PC-3 (cell line): ENCODE measurements at regions of chr6 and their contacts with region 1.

Region 1: DNA sequence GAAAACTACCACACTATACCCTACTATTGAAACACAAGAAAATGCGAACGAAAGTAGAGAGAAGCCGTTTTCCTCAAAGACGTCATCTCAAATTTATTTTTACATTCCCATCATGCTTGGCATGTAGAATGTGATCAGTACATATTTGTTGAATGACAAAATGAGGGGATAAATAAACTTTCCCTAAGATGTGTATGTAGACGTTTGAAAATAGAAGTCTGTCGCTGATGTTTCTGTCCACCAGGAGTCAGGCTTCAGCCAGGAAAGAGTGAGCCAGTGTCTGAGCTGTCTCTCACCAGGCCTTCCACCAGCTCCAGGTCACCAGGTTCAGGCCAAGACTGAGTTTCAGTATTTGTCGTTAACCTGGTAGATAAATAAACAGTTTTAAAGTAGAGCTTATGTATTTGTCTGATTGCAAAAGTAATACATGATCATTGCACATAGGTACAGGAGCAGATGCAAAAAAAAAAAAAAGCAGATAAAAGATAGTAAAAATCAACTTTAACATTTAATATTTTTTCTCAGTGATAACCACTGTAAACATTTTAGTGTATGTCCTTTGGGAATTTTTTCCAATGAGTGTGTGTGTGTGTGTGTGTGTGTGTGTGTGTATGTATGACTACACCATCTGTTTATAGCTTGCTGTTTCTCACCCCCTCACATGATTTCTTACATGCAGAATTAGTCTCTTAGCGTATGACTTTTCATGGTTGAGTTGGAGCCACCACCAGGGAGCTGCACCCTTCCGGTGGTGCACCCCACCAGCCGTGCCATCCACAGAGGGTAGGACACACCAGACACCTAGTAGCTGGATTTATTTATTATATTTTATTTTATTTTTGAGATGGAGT is 26.2 kb downstream of the WRNIP1 start:
- DNase-seq: peak; percentile 93
- ATAC-seq: peak; percentile 80
- H3K4me3 ChIP-seq: no peak overlapping the region
- H3K27ac ChIP-seq: peak overlapping the region; percentile 98
- H3K4me1 ChIP-seq: peaks cover 59% of the 10 kb centered on the region
- H3K27me3 ChIP-seq: no peaks in the 10 kb centered on the region
- CTCF ChIP-seq: peak; percentile 92

Region 2: GRCh38 chr6:2810092-2810671 is 18.8 kb after region 1 on chr6:
- CTCF ChIA-PET with region 1: no interaction called
- POLR2A ChIA-PET with region 1: no interaction called
- intact Hi-C with region 1: loop called (anchors 2 kb)
- DNase-seq: peak; percentile 98
- ATAC-seq: peak; percentile 94
- H3K4me3 ChIP-seq: no peak overlapping the region
- H3K27ac ChIP-seq: peak overlapping the region; percentile 98
- H3K4me1 ChIP-seq: peaks cover 40% of the 10 kb centered on the region
- H3K27me3 ChIP-seq: no peaks in the 10 kb centered on the region
- CTCF ChIP-seq: no peak

Region 3: GRCh38 chr6:2841264-2842138 is 50.2 kb after region 1 on chr6 and contains the start of gene SERPINB1:
- CTCF ChIA-PET with region 1: interaction called, 26 read pairs
- POLR2A ChIA-PET with region 1: interaction called, 4 read pairs
- intact Hi-C with region 1: loop called (anchors 1 kb)
- DNase-seq: peak; percentile 83
- ATAC-seq: peak; percentile 61
- H3K4me3 ChIP-seq: peak within 1 kb of the TSS; percentile 81
- H3K27ac ChIP-seq: peak within 1 kb of the TSS; percentile 94
- H3K4me1 ChIP-seq: peaks cover 61% of the 10 kb centered on the region
- H3K27me3 ChIP-seq: no peaks in the 10 kb centered on the region
- CTCF ChIP-seq: 0 out of 2 replicates have a peak, but pooled peaks have one; percentile 8
- total RNA-seq, gene SERPINB1: 78.7 and 133 TPM in 2 replicates

Region 4: GRCh38 chr6:2853761-2854395 is 62.5 kb after region 1 on chr6:
- CTCF ChIA-PET with region 1: interaction called, 4 read pairs
- POLR2A ChIA-PET with region 1: interaction called, 3 read pairs
- intact Hi-C with region 1: loop called (anchors 1 kb)
- DNase-seq: peak; percentile 95
- ATAC-seq: peak; percentile 63
- H3K4me3 ChIP-seq: peak overlapping the region; percentile 68
- H3K27ac ChIP-seq: peak overlapping the region; percentile 99
- H3K4me1 ChIP-seq: peaks cover 40% of the 10 kb centered on the region
- H3K27me3 ChIP-seq: no peaks in the 10 kb centered on the region
- CTCF ChIP-seq: peak; percentile 66

Region 5: DNA sequence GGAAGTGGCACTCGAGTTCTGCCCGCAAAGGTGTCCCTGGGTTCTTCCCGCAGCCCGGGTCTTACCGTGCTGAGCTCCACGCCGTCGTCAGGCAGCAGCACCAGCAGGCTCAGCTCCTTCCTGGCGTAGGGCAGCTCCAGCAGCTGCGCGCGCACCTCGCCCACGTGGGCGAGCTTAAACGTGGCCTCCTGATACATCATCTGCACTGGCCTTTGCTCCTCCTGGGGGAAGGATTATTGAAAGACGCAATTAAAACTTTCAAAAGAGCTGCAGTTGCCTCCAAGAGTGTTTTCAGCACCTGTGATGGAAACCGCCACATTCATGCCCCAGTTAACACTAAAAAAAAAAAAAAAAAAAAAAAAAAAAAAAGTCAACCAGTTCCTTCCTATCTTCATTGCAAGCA is 100.4 kb after region 1 on chr6:
- CTCF ChIA-PET with region 1: no interaction called
- POLR2A ChIA-PET with region 1: no interaction called
- intact Hi-C with region 1: no loop called
- DNase-seq: peak; percentile 70
- ATAC-seq: peak; percentile 100
- H3K4me3 ChIP-seq: peak overlapping the region; percentile 48
- H3K27ac ChIP-seq: no peak overlapping the region
- H3K4me1 ChIP-seq: peaks cover 12% of the 10 kb centered on the region
- H3K27me3 ChIP-seq: no peaks in the 10 kb centered on the region
- CTCF ChIP-seq: no peak

Region 6: DNA sequence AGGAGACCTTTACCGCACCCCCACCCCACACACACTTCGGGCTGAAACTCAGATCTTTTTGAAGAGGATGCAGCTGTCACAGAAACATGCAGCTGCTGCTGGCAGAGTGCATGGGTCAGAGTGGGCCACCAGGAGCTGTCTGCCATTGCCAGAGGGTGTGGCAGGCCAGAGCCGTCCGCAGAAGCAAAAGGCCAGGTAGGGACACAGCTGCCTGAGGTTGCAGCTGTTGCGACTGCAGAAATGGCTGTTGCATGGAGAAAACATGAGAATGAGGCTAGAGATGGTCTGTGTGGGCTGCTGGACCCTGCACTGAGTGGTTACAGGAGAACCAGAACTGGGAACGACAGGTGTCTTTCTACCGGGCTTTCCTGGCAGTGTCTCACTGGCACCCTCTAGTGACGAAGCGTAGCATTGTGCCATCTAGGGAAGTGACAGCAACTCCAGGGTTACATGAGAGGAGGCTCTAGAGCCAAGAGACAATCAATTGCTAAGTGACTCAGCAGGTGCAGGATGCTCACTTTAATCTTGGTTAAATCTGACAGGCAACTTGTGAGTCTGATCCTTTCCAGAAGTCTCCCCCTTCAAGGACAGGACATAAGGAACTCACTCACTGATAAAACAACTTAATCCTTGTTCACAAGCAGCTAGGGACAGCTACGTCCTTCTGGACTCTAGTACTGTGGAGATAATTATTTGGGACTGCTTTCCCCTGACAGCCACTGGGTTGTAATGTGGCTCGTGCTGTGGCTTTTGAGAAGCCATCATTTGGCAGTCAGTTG is 140.8 kb after region 1 on chr6:
- CTCF ChIA-PET with region 1: interaction called, 8 read pairs
- POLR2A ChIA-PET with region 1: interaction called, 3 read pairs
- intact Hi-C with region 1: loop called (anchors 1 kb)
- DNase-seq: peak; percentile 97
- ATAC-seq: peak; percentile 99
- H3K4me3 ChIP-seq: no peak overlapping the region
- H3K27ac ChIP-seq: peak overlapping the region; percentile 16; the same call in 1 of the 2 replicates
- H3K4me1 ChIP-seq: peaks cover 4% of the 10 kb centered on the region; the same call in 1 of the 2 replicates
- H3K27me3 ChIP-seq: no peaks in the 10 kb centered on the region
- CTCF ChIP-seq: peak; percentile 96